ENCODE measurements at regions of chr14 and their contacts with region 1.

Region 1: GRCh38 chr14:73136387-73137225 is at the start of gene PSEN1:
- DNase-seq: peak; percentile 98
- H3K4me3 Mint-ChIP-seq: peak within 1 kb of the TSS; percentile 77
- H3K27ac Mint-ChIP-seq: peak within 1 kb of the TSS; percentile 55
- H3K4me1 Mint-ChIP-seq: peaks cover 12% of the 10 kb centered on the region
- H3K27me3 Mint-ChIP-seq: no peaks in the 10 kb centered on the region
- CTCF ChIP-seq: no peak
- total RNA-seq, gene PSEN1: 68.3 and 69.5 TPM in 2 replicates

Region 2: GRCh38 chr14:71956920-71957563 is 1179.6 kb before region 1 on chr14:
- CTCF ChIA-PET with region 1: interaction called, 12 read pairs
- intact Hi-C with region 1: no loop called
- DNase-seq: no peak
- H3K4me3 Mint-ChIP-seq: no peak overlapping the region
- H3K27ac Mint-ChIP-seq: no peak overlapping the region
- H3K4me1 Mint-ChIP-seq: no peaks in the 10 kb centered on the region
- H3K27me3 Mint-ChIP-seq: peaks cover 17% of the 10 kb centered on the region
- CTCF ChIP-seq: no peak

Measured in Calu3 (cell line).